PC-9 (cell line): ENCODE measurements at regions of chr1 and their contacts with region 1.

Region 1: GRCh38 chr1:15803354-15803753 is 4.1 kb downstream of the UQCRHL start:
- DNase-seq: no peak
- H3K4me3 ChIP-seq: no peak overlapping the region
- H3K27ac ChIP-seq: no peak overlapping the region
- H3K4me1 ChIP-seq: peaks cover 41% of the 10 kb centered on the region
- H3K27me3 ChIP-seq: no peaks in the 10 kb centered on the region
- CTCF ChIP-seq: peak; percentile 39

Region 2: GRCh38 chr1:15526490-15527339 is 276.6 kb before region 1 on chr1 and contains the start of gene DNAJC16:
- CTCF ChIA-PET with region 1: no interaction called
- POLR2A ChIA-PET with region 1: no interaction called
- intact Hi-C with region 1: loop called (anchors 5 kb)
- DNase-seq: peak; percentile 98 to 99
- H3K4me3 ChIP-seq: peak within 1 kb of the TSS; percentile 81
- H3K27ac ChIP-seq: peak within 1 kb of the TSS; percentile 69
- H3K4me1 ChIP-seq: peaks cover 17% of the 10 kb centered on the region
- H3K27me3 ChIP-seq: no peaks in the 10 kb centered on the region
- CTCF ChIP-seq: no peak
- total RNA-seq, gene DNAJC16: 12.0 and 18.8 TPM in 2 replicates

Region 3: DNA sequence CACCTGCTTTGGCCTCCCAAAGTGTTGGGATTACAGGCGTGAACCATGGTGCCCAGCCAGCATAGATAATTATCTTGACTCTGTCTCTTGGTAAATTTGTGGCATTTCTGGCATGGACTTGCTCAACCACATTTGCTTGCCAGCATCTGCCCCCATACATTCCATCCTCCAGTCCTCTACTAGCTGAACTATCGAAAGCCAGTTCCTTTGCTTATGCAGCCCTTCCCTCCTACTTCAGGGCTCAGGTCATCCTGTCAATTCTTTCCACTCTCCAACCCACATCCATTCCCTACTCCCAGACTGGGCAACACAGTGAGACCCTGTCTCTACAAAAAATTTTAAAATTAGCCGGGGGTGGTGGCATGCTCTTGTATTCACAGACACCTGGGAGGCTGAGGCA is 17.1 kb after region 1 on chr1:
- CTCF ChIA-PET with region 1: interaction called, 5 read pairs
- POLR2A ChIA-PET with region 1: interaction called, 5 read pairs
- intact Hi-C with region 1: loop called (anchors 1 kb)
- DNase-seq: peak; percentile 64 to 75
- H3K4me3 ChIP-seq: no peak overlapping the region
- H3K27ac ChIP-seq: 0 out of 2 replicates have a peak overlapping the region, but pooled peaks have one; percentile 19
- H3K4me1 ChIP-seq: no peaks in the 10 kb centered on the region
- H3K27me3 ChIP-seq: no peaks in the 10 kb centered on the region
- CTCF ChIP-seq: no peak

Region 4: GRCh38 chr1:15847100-15847892 is 43.9 kb after region 1 on chr1 and contains the start of gene SPEN:
- CTCF ChIA-PET with region 1: no interaction called
- POLR2A ChIA-PET with region 1: interaction called, 4 read pairs
- intact Hi-C with region 1: loop called (anchors 2 kb)
- DNase-seq: peak; percentile 77 to 97
- H3K4me3 ChIP-seq: peak within 1 kb of the TSS; percentile 95
- H3K27ac ChIP-seq: peak within 1 kb of the TSS; percentile 90
- H3K4me1 ChIP-seq: peaks cover 20% of the 10 kb centered on the region
- H3K27me3 ChIP-seq: no peaks in the 10 kb centered on the region
- CTCF ChIP-seq: no peak
- total RNA-seq, gene SPEN: 44.9 and 46.8 TPM in 2 replicates

Region 5: DNA sequence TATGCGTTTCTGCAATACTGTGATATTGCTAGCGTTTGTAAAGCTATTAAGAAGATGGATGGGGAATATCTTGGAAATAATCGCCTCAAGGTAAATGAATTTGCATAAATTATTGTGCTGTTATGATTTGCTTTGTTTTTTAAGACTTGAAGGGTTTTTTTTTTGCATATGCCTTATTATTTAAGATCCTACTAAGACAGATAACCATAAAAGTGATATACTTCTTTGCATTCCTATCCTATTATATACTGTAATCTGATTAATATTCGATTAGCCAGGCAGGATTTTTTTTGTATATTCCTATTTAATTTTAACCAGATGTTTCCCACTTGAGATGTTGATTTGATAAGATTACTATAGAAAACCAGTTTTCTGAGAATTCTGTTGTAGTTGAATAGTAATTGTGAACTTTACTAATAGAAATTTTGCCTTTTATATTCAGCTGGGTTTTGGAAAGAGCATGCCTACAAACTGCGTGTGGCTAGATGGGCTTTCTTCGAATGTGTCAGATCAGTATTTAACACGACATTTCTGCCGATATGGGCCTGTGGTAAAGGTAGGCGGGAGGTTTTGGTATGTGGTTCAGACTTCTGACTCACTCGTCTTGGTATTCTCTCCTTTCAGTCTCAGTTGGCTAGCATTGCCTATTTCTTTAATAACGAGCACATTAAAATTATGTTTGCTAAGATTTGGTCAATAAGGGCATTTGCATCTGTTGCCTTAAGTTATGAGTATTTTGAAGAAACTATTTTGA is 115.8 kb after region 1 on chr1:
- CTCF ChIA-PET with region 1: no interaction called
- POLR2A ChIA-PET with region 1: no interaction called
- intact Hi-C with region 1: loop called (anchors 1 kb)
- DNase-seq: peak; percentile 52 to 58
- H3K4me3 ChIP-seq: no peak overlapping the region
- H3K27ac ChIP-seq: peak overlapping the region; percentile 39
- H3K4me1 ChIP-seq: peaks cover 12% of the 10 kb centered on the region
- H3K27me3 ChIP-seq: no peaks in the 10 kb centered on the region
- CTCF ChIP-seq: no peak

Region 6: GRCh38 chr1:16173020-16173980 is 369.9 kb after region 1 on chr1:
- CTCF ChIA-PET with region 1: no interaction called
- POLR2A ChIA-PET with region 1: no interaction called
- intact Hi-C with region 1: loop called (anchors 5 kb)
- DNase-seq: peak; percentile 95 to 98
- H3K4me3 ChIP-seq: no peak overlapping the region
- H3K27ac ChIP-seq: peak overlapping the region; percentile 98
- H3K4me1 ChIP-seq: peaks cover 97% of the 10 kb centered on the region
- H3K27me3 ChIP-seq: no peaks in the 10 kb centered on the region
- CTCF ChIP-seq: no peak

Region 7: GRCh38 chr1:17011439-17012307 is 1208.3 kb after region 1 on chr1 and contains the start of gene ATP13A2:
- CTCF ChIA-PET with region 1: no interaction called
- POLR2A ChIA-PET with region 1: interaction called, 13 read pairs
- intact Hi-C with region 1: no loop called
- DNase-seq: peak; percentile 65 to 88
- H3K4me3 ChIP-seq: peak within 1 kb of the TSS; percentile 69
- H3K27ac ChIP-seq: no peak within 1 kb of the TSS
- H3K4me1 ChIP-seq: no peaks in the 10 kb centered on the region
- H3K27me3 ChIP-seq: no peaks in the 10 kb centered on the region
- CTCF ChIP-seq: no peak
- total RNA-seq, gene ATP13A2: 39.9 and 43.6 TPM in 2 replicates